Lower leg skin (tissue), 4 donors: ENCODE measurements at regions of chr19 and their contacts with region 1.

Region 1: GRCh38 chr19:50870417-50871089 is 2.7 kb upstream of the KLK2 start:
- DNase-seq: no peak
- H3K4me3 ChIP-seq: no peak overlapping the region
- CTCF ChIP-seq: no peak
- POLR2A ChIP-seq: no peak

Region 2: DNA sequence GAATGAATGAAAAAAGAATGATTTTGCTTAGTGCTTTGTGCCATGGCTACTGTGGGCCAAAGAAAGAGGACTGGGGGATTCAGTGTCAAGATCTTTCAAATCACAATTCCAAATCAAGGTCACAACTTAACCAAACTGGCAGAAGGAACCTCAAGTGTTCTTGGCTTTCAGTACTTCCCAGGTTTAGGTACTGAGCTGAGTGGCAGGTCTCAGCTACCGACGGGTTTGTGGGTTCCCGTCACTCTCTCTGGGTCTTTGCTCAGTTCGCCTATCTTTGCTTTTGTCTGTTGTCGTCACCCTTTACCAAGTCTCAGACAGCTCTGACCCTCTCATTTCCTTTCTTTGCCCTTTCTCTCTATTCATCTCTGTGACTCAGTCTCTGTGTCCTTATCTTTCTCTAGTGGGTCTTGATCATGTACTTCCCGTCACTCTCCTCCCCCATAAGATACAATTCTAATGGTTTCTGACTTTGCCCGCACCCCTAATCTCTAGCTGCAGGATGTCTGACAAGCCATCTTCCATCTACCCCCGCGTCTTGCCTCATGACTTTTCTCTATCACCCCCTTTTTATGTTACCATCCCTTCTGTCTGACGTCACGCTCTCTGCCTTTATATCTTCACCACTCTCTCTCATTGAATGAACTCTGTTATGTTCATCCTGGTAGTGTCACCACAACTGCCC is 269.0 kb before region 1 on chr19:
- intact Hi-C with region 1: loop called (anchors 5 kb)
- DNase-seq: peak in 1 of 2 donors; percentile 25
- H3K4me3 ChIP-seq: no peak overlapping the region
- CTCF ChIP-seq: no peak
- POLR2A ChIP-seq: no peak

Region 3: DNA sequence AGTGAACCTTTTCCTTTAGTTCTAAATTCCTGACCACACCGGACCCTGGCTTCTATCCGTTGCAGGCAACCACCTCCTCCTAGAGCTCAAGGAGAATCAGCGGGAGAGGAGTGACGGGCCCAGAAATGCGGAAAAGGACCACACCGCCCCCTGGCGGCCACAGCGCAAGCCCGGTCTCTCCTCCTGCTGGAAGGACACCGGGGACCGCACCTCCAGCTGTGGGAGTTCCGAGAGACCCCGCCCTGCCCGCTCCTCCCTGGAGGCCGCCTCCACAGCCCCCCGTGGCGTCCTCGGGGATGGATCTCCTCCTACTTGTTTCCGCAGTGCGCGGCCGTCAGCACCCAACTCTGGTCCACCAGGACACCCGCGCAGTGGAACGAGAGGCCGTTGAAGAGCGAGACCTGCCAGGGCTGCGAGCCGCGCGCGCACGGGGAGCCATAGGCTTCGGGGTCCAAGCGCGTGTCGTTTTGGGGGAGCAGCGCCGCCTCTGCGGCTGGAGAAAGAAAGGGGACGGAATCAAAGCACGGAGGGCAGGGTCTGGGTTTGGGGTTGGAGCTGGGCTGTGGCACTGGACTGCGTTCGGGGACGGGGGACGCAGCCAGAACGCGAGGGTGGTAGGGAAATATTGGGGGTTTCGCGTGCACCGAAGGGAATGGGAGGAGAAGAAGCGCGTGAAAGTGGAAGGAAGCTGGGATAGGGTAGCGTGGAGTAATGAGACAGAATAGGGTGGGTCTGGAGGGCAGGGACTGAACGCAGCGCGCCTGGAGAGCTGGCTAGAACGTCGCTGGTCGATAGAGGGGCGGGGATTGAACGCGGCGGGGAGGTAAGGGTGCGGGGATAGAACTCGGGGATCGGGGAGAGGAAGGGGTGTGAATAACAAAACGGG is 146.5 kb after region 1 on chr19:
- intact Hi-C with region 1: no loop called
- DNase-seq: peak; percentile 52 to 93
- H3K4me3 ChIP-seq: peak overlapping the region; percentile 27
- CTCF ChIP-seq: no peak
- POLR2A ChIP-seq: no peak